HCT116 (cell line): ENCODE measurements at regions of chr1 and their contacts with region 1.

Region 1: GRCh38 chr1:115138968-115139367 is 49.7 kb upstream of the TSPAN2 start:
- DNase-seq: peak; percentile 84
- ATAC-seq: peak; percentile 97
- H3K4me3 ChIP-seq: no peak overlapping the region
- H3K27ac ChIP-seq: no peak overlapping the region
- H3K4me1 ChIP-seq: peaks cover 5 to 27% of the 10 kb centered on the region in 2 experiments; a peak in 3 of 4 replicates
- H3K27me3 ChIP-seq: no peaks in the 10 kb centered on the region
- CTCF ChIP-seq: peak; percentile 90 to 95 (median 93)
- POLR2A ChIP-seq: no peak
- RAD21 ChIP-seq: peak; percentile 97

Region 2: DNA sequence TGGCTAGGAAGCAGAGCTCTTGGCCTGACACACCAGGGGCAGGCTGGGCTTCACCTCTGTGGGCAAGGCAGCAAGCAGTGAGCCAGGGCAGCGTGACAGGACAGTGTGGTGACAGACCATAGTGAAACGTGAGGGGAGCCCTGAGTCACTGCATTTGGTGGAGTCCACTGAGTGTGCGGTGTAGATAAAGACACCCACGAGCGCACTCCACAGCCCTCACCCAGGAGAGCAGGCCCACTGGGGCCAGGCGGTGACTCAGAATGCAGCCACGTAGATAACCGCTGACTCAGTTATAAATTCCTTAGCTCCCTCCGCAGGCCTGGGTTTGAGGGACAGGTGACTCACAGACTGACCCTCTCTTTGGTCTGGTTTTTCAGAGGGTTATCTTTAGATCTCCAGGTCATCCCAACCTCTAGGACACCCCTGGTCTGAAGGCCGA is 40.4 kb after region 1 on chr1:
- CTCF ChIA-PET with region 1: interaction called, 10 read pairs
- POLR2A ChIA-PET with region 1: no interaction called
- RAD21 ChIA-PET with region 1: no interaction called
- intact Hi-C with region 1: no loop called
- DNase-seq: peak; percentile 81
- ATAC-seq: peak; percentile 92
- H3K4me3 ChIP-seq: peak overlapping the region in 1 of 2 experiments; percentile 35; a peak in 1 of 4 replicates
- H3K27ac ChIP-seq: peak overlapping the region; percentile 33; the same call in 1 of the 2 replicates
- H3K4me1 ChIP-seq: peaks cover 14 to 25% of the 10 kb centered on the region in 2 experiments
- H3K27me3 ChIP-seq: peaks cover 7% of the 10 kb centered on the region; the same call in 1 of the 2 replicates
- CTCF ChIP-seq: no peak
- POLR2A ChIP-seq: no peak
- RAD21 ChIP-seq: no peak

Region 3: DNA sequence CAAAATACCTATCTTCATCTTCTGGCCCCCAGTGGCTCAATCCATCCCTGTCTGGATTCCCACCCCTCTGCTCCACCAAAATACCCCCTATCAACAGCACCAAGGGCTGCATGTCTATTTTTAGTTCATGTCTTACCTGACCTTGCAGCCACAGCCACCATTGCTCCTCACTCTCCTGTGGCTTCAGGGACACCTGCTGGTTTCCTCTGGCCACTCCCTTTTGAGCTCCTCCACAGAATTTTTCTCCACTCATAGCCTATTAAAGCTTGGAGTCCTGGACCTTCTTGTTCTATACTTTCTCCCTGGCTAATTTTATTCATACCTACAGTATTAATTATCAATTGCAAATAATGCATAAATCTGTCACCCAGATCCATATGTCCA is 324.4 kb after region 1 on chr1:
- CTCF ChIA-PET with region 1: interaction called, 52 read pairs
- POLR2A ChIA-PET with region 1: interaction called, 4 read pairs
- RAD21 ChIA-PET with region 1: interaction called, 4 to 5 read pairs
- intact Hi-C with region 1: loop called (anchors 1 kb)
- DNase-seq: no peak
- ATAC-seq: peak; percentile 66
- H3K4me3 ChIP-seq: no peak overlapping the region
- H3K27ac ChIP-seq: no peak overlapping the region
- H3K4me1 ChIP-seq: no peaks in the 10 kb centered on the region
- H3K27me3 ChIP-seq: no peaks in the 10 kb centered on the region
- CTCF ChIP-seq: peak; percentile 20 to 44 (median 31); a peak in 4 of 6 replicates
- POLR2A ChIP-seq: no peak
- RAD21 ChIP-seq: peak; percentile 77

Region 4: DNA sequence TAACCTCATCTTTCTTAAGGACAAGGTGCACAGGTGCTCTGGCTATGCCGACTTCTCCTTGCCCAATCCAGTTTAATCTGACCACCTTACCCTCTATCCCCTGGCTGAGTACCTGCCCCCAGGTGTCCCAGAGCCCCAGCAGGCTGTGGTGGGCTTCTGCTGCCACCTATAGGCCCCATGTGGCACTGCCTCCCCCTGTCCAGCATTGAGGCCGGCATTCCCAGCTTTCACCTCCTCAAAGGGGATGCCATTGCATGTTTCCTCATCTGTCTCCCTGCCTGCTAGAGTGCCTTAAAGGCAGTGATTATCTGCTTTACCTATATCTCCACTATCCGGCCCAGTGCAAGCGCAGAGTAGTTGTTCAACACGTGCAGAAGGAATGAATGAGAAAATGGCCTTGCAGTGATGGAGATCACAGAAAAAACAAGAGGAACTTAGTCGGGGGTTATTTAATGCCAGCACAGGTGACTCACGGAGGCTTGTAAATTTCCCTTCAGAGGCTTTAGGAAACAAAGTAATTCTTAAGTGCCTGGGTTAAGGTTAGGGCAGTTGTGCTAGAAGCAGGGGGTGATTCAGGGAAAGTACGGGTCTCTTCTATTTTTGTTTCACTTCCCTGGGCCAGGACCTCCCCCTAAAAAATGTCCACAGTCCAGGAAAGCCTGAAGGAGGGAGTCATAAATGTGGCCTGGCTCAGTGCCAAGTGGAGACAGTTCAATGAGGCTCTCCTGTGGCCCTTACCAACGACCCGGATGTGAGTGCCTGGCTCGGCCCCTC is 330.9 kb after region 1 on chr1:
- CTCF ChIA-PET with region 1: interaction called, 52 read pairs
- POLR2A ChIA-PET with region 1: interaction called, 4 read pairs
- RAD21 ChIA-PET with region 1: interaction called, 4 to 7 read pairs
- intact Hi-C with region 1: loop called (anchors 1 kb)
- DNase-seq: peak; percentile 31
- ATAC-seq: peak; percentile 97
- H3K4me3 ChIP-seq: peak overlapping the region in 1 of 2 experiments; percentile 25; a peak in 1 of 4 replicates
- H3K27ac ChIP-seq: no peak overlapping the region
- H3K4me1 ChIP-seq: peaks cover 4 to 8% of the 10 kb centered on the region in 2 experiments; a peak in 3 of 4 replicates
- H3K27me3 ChIP-seq: no peaks in the 10 kb centered on the region
- CTCF ChIP-seq: peak; percentile 83 to 98 (median 98)
- POLR2A ChIP-seq: no peak
- RAD21 ChIP-seq: peak; percentile 93

Region 5: GRCh38 chr1:115506926-115507589 is 368.1 kb after region 1 on chr1:
- CTCF ChIA-PET with region 1: no interaction called
- POLR2A ChIA-PET with region 1: no interaction called
- RAD21 ChIA-PET with region 1: no interaction called
- intact Hi-C with region 1: loop called (anchors 1 kb)
- DNase-seq: peak; percentile 29
- ATAC-seq: peak; percentile 83
- H3K4me3 ChIP-seq: no peak overlapping the region
- H3K27ac ChIP-seq: no peak overlapping the region
- H3K4me1 ChIP-seq: no peaks in the 10 kb centered on the region
- H3K27me3 ChIP-seq: no peaks in the 10 kb centered on the region
- CTCF ChIP-seq: peak; percentile 15 to 59 (median 57); a peak in 5 of 6 replicates
- POLR2A ChIP-seq: no peak
- RAD21 ChIP-seq: peak; percentile 55; the same call in 1 of the 2 replicates

Region 6: GRCh38 chr1:115595279-115596079 is 456.5 kb after region 1 on chr1:
- CTCF ChIA-PET with region 1: interaction called, 21 read pairs
- POLR2A ChIA-PET with region 1: no interaction called
- RAD21 ChIA-PET with region 1: interaction called in 1 of 2 experiments, 5 read pairs
- intact Hi-C with region 1: loop called (anchors 1 kb)
- DNase-seq: peak; percentile 68
- ATAC-seq: peak; percentile 97
- H3K4me3 ChIP-seq: no peak overlapping the region
- H3K27ac ChIP-seq: no peak overlapping the region
- H3K4me1 ChIP-seq: peaks cover 4% of the 10 kb centered on the region in 2 experiments; a peak in 2 of 4 replicates
- H3K27me3 ChIP-seq: no peaks in the 10 kb centered on the region
- CTCF ChIP-seq: peak; percentile 76 to 97 (median 90)
- POLR2A ChIP-seq: no peak
- RAD21 ChIP-seq: peak; percentile 91

Region 7: DNA sequence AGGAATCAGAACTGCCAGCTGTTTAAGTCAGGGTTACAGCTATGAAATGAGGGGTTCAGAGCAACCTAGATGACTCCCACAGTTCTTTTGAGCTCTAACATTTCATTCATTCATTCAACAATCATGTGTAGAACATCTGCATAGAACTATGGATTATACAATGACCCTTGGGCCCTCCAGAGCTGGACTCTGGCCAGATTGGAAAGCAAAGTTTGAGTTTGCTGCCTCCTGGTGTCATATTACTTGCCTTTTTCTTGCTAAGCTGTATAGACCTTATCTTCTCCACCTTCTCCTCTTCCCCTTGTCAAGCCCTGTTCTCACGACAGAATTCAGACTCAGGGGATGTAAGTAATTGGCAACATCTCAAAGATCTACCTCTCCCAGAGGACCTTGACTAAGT is 625.6 kb after region 1 on chr1:
- CTCF ChIA-PET with region 1: interaction called, 3 read pairs
- POLR2A ChIA-PET with region 1: no interaction called
- RAD21 ChIA-PET with region 1: no interaction called
- intact Hi-C with region 1: loop called (anchors 5 kb)
- DNase-seq: peak; percentile 34
- ATAC-seq: peak; percentile 78
- H3K4me3 ChIP-seq: no peak overlapping the region
- H3K27ac ChIP-seq: no peak overlapping the region
- H3K4me1 ChIP-seq: peaks cover 0 to 5% of the 10 kb centered on the region in 2 experiments; a peak in 2 of 4 replicates
- H3K27me3 ChIP-seq: no peaks in the 10 kb centered on the region
- CTCF ChIP-seq: peak; percentile 35 to 68 (median 55); a peak in 5 of 6 replicates
- POLR2A ChIP-seq: no peak
- RAD21 ChIP-seq: peak; percentile 82